Dorsolateral prefrontal cortex (tissue), 120 donors: ENCODE measurements at regions of chr10 and their contacts with region 1.

Region 1: GRCh38 chr10:103069453-103070331 is 123.4 kb downstream of the NT5C2 start:
- DNase-seq: peak in 8 of 10 donors; percentile 60 to 77 (median 65)
- H3K4me3 ChIP-seq: peak overlapping the region in 1 of 59 donors; percentile 30
- H3K27ac ChIP-seq: peak overlapping the region in 11 of 59 donors; percentile 5 to 48 (median 25)
- H3K27me3 ChIP-seq: no peaks in the 10 kb centered on the region
- CTCF ChIP-seq: peak; percentile 33 to 80 (median 68)

Region 2: GRCh38 chr10:103244663-103245271 is 175.1 kb after region 1 on chr10:
- intact Hi-C with region 1: loop called (anchors 5 to 10 kb)
- DNase-seq: peak; percentile 41 to 82 (median 70)
- H3K4me3 ChIP-seq: peak overlapping the region in 2 of 59 donors; percentile 6 to 31
- H3K27ac ChIP-seq: no peak overlapping the region
- H3K27me3 ChIP-seq: no peaks in the 10 kb centered on the region
- CTCF ChIP-seq: peak; percentile 52 to 96 (median 88)